ENCODE measurements at regions of chr2 and their contacts with region 1.

Region 1: DNA sequence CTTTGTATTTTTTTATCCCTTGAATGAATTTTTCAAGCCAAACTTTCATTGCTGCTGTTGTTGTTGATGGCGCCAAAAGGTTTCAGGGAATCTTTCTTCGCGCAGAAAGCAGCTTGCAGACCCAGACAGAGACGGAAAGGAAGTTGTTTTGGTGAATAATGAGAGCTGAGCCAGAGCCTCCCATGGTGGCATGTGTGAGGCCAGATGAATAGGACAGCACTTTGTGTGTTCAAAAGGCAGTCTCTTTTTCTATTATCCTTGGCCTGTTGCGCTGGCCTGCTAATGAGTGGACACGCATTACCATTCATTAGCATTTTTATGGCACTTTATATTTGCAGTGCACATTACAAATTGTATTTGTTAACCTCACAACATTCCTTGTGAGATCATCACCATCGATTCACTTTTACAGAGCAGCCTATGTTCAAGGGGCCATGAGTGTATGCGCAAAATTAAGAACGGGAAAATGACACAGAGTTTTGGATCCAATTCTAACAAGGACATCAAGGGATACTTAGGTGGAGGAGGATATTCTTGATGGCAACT is 754.7 kb downstream of the BCL11A start:
- DNase-seq: no peak
- H3K4me3 ChIP-seq: no peak overlapping the region
- H3K27ac ChIP-seq: no peak overlapping the region
- H3K4me1 ChIP-seq: no peaks in the 10 kb centered on the region
- H3K27me3 ChIP-seq: no peaks in the 10 kb centered on the region
- CTCF ChIP-seq: no peak
- POLR2A ChIP-seq: no peak

Region 2: GRCh38 chr2:59449269-59449668 is 349.5 kb before region 1 on chr2:
- intact Hi-C with region 1: loop called (anchors 5 kb)
- DNase-seq: no peak
- H3K4me3 ChIP-seq: no peak overlapping the region
- H3K27ac ChIP-seq: no peak overlapping the region
- H3K4me1 ChIP-seq: no peaks in the 10 kb centered on the region
- H3K27me3 ChIP-seq: no peaks in the 10 kb centered on the region
- CTCF ChIP-seq: no peak
- POLR2A ChIP-seq: no peak

Region 3: DNA sequence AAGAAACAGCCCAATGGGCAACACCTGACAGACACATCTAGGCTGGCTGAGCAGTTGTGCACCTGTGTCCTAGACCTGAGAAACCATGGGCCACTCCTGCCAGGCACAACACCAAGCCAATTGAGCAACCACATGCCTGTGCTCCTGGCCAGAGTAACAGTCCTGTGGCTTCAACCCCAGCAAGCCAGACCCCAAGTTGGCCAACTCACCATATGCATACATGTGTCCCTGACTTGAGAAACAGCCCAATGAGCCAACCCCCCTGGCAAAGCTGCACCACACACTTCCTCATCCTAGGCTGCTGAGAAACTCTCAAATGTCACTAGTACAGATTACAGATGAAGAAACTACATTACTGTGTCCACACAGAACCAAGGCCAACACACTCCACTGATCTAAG is 1635.6 kb after region 1 on chr2:
- intact Hi-C with region 1: no loop called
- DNase-seq: no peak
- H3K4me3 ChIP-seq: no peak overlapping the region
- H3K27ac ChIP-seq: no peak overlapping the region
- H3K4me1 ChIP-seq: no peaks in the 10 kb centered on the region
- H3K27me3 ChIP-seq: no peaks in the 10 kb centered on the region
- CTCF ChIP-seq: no peak
- POLR2A ChIP-seq: no peak

Measured in breast epithelium (tissue), 4 donors.